Motor neuron (in vitro differentiated cells): ENCODE measurements at regions of chr17 and their contacts with region 1.

Region 1: GRCh38 chr17:21511363-21512198 is 135.4 kb downstream of the KCNJ12 start:
- ATAC-seq: peak; percentile 92 to 97 (median 96)
- H3K4me3 ChIP-seq: peak overlapping the region; percentile 32 to 40 (median 36)
- H3K27ac ChIP-seq: no peak overlapping the region
- H3K4me1 ChIP-seq: peaks cover 7 to 9% of the 10 kb centered on the region in 2 donors

Region 2: DNA sequence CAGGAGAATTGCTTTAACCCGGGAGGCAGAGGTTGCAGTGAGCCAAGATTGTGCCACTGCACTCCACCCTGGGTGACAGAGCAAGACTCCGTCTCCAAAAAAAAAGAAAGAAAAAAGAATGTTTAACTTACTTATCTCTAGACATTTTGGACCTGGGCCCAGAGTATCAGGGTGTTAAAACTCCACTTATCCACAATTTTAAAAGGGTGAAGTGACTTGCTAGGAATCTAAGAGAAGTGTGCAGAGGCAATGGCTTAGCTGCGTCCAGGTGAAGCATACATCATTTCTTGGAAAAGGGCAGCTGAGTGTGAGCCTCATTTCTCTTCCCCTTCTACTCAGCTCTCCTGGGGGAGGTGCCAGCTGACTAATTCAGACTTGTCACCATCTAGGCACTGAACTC is 1838.0 kb before region 1 on chr17:
- in situ Hi-C with region 1: no loop called
- ATAC-seq: no peak
- H3K4me3 ChIP-seq: no peak overlapping the region
- H3K27ac ChIP-seq: no peak overlapping the region
- H3K4me1 ChIP-seq: peaks cover 0 to 3% of the 10 kb centered on the region in 2 donors

Region 3: GRCh38 chr17:21126645-21127510 is 384.7 kb before region 1 on chr17 and contains the start of gene DHRS7B:
- in situ Hi-C with region 1: loop called in 1 of 9 experiments (anchors 25 kb)
- ATAC-seq: peak; percentile 72 to 98 (median 97)
- H3K4me3 ChIP-seq: peak within 1 kb of the TSS; percentile 52 to 95 (median 71)
- H3K27ac ChIP-seq: peak within 1 kb of the TSS; percentile 52 to 69
- H3K4me1 ChIP-seq: peaks cover 0 to 3% of the 10 kb centered on the region in 2 donors
- total RNA-seq, gene DHRS7B: 8.3 to 49.4 (median 18.3) TPM

Region 4: DNA sequence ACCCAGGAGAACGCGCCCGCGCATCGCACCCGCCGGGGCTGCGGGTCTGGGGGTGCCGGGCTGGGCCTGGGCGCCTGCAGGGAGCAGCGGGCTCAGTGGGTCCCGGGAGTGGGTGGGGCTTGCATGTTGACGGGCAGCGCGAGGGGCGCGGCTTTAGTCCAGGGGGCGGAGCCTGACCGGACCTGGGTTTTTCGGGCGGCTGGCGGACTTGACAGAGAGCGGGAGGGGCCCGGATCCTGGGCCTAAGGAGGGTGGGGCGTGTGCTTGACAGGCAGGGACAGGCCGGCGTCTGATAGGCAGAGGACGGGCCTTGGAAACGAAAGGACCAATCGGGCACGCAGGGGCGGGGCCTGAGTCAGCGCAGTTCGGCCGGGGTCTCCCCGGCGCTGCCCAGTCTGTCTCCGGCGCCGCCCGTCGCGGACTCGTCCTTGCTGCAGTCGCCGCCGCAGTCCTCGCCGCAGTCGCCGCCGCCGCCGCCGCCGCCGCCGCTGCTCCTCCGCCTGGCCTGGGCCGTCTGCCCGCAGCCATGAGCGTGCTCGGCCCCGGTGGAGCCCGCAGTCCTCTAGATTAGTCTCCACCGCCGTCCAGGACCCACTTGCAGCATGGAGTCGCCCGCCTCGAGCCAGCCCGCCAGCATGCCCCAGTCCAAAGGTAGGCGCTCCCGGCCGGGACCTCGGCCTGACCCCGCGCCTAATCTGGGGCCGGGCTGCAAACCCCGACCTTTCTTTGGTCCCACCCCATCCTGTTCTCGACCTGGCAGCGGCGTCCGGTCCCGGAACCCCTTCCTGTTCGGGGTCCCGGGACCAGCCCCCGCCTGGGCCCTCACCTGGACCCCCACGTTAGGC is 227.0 kb before region 1 on chr17 and contains the start of gene MAP2K3:
- in situ Hi-C with region 1: loop called in 1 of 9 experiments (anchors 25 kb)
- ATAC-seq: peak; percentile 68 to 94 (median 90)
- H3K4me3 ChIP-seq: peak within 1 kb of the TSS; percentile 66 to 78 (median 74)
- H3K27ac ChIP-seq: peak within 1 kb of the TSS; percentile 33 to 42
- H3K4me1 ChIP-seq: peaks cover 11 to 15% of the 10 kb centered on the region in 2 donors
- total RNA-seq, gene MAP2K3: 3.8 to 41.7 (median 6.7) TPM

Region 5: DNA sequence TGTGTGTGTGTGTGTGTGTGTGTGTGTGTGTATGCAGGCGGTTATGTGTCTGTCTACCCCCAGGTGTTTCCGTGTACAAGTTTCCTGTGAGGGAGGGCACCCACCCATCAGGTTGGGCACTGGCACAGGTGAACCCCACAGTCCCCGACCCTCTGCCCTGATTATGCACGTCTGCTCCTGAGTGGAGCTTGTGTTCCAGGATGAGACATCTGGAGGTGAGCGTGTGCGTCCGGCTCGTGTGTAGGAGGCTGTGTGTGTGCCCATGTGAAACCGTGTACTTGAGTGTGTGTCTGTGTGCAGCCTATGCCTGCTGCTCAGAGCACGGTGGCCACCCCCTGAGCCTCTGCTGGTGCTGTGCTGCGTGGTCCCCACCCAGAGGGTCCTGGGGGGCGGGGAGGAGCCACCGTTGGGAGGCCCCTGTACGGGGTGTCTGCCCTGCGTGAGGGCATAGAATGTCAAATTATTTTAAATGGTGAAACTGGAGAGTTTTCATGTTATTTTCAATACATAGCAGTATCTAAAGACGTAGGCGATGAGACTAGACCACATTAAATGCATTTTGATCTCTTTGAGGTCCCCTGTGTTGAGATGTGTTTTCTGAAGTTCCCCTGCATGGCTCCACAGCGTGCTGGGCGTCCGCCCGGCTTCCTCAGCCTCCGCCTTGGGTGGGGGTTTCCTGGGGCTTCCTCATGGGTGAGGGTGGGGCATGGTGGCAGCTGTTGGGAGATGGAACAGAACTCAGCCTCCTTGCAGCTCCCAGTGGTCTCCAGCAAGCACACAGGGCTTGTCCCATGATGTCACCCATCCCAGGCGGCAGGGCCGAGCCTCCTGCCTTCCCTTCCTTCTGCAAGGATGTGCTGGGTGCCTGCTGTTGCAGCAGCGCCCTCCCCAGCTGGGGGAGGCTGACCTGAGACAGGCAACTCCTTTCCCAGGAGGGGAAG is 92.0 kb before region 1 on chr17:
- in situ Hi-C with region 1: no loop called
- ATAC-seq: peak in 6 of 8 experiments; percentile 14 to 83 (median 66)
- H3K4me3 ChIP-seq: no peak overlapping the region
- H3K27ac ChIP-seq: no peak overlapping the region
- H3K4me1 ChIP-seq: peaks cover 0 to 3% of the 10 kb centered on the region in 2 donors

Region 6: DNA sequence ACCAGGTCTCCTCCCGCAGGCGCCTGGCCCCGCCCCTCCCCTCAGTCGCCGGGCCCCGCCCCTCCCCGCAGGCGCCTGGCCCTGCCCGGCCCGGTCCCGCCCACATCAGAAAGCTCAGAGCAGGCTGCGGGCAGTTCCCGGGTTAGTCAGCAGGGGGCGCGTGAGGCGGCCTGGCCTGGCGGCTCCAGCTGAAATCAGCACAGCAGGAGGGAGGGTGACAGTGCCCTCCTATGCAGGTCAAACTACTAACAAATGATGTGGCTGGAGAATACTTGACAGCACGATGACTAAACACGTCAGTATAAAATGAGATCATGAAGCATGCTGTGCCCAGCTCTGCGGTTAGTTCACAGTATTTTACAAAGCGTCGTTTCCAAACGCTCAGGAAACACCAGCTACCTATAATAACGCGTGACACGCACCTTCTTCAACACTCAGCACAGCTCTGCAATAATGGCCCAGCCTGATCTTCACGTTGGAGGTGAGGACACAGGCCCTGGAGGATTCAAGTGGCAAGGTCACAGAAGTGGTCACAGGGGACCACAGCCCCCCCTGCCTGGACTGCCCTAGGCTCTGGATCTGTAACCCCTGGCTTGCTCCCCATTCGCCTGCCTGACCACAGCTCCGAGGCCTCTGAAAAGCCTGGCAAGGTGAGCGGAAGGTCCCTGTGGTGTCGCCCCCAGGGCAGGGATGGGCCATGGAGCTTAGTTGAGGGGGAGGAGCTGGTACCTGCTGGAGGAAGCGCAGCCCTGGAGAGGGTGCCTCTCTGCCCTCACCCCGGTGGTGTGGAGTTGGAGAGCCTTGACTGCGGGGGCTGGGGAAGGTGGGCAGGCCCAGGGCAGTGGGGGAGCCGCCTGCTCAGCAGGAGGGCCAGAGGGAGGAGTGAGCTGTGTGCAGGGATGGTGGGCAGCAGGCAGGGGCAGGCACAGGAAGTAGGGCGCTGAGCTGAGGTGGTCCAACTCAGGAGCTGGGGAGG is 54.2 kb before region 1 on chr17:
- in situ Hi-C with region 1: loop called in 1 of 9 experiments (anchors 10 kb)
- ATAC-seq: peak; percentile 84 to 93 (median 90)
- H3K4me3 ChIP-seq: peak overlapping the region in 1 of 5 donors; percentile 12
- H3K27ac ChIP-seq: peak overlapping the region; percentile 39 to 72
- H3K4me1 ChIP-seq: peaks cover 9 to 11% of the 10 kb centered on the region in 2 donors